ENCODE measurements at regions of chr19 and their contacts with region 1.

Region 1: DNA sequence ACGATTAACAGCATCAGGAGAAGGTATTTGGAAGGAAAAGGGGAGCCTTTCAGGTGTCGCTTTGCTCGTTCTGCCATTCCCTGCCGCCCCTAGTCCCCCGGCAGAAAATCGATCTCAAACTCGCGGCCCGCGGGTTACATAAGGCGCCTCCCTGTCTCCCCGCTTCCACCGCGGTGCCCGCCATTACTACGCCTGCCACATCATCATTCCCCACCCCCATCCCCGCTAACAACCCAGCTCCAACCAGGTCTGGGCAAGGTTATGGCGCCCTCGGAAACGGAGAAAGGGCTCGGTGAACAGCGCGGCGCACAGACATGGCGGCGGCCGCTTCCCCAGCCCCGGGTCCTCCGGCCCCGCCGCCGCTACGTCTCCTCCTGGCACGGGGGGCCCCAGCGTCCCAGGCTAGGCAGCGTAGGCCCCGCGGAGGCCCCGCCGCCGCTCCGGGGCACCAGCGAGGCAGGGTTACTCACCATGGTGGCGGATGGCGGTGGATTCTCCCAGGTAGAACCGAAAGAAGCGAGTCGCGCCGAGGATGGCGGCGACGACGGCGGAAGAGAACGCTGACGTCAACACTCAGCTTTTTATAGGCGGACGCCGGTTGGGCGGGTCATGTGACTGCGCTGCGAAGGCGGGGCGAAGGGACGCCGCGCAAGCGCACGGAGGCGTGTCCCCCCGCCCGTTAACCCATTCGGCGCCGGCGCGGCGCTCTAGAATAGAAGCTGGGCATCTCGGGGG is at the start of gene EEF2:
- DNase-seq: peak; percentile 90
- H3K4me3 Mint-ChIP-seq: peak within 1 kb of the TSS; percentile 95
- H3K27ac Mint-ChIP-seq: peak within 1 kb of the TSS; percentile 90
- H3K4me1 Mint-ChIP-seq: peaks cover 29% of the 10 kb centered on the region
- H3K27me3 Mint-ChIP-seq: no peaks in the 10 kb centered on the region
- CTCF ChIP-seq: no peak
- total RNA-seq, gene EEF2: 2,296 and 3,126 TPM in 2 replicates

Region 2: DNA sequence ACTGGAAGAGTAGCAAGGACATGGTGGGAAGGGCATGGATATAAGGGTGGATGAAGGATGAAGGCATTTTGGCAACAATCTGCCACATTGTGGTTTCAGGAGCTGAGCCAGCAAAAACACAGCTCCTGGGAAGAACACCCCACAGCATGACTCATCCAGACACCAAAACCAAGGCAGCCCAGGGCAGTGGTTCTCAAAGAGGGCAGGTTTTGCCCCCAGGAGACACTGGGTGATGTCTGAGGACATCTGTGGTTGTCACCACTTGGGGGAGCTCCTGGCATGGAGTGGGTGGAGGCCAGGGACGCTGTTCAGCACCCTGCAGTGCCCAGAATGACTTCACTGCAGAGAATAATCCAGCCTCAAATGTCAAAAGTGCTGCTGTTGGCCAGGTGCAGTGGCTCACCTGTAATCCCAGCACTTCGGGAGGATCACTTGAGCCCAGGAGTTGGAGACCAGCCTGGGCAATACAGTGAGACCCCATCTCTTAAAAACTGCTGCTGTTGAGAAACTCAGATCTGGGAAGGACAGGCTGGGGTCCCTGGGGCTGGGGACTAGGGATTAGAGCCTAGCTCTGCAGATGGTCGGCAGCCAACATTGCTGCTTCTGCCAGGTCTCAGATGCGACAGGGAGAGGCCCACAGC is 132.3 kb before region 1 on chr19:
- CTCF ChIA-PET with region 1: interaction called, 4 read pairs
- POLR2A ChIA-PET with region 1: interaction called, 11 read pairs
- intact Hi-C with region 1: loop called (anchors 1 kb)
- DNase-seq: peak; percentile 99
- H3K4me3 Mint-ChIP-seq: no peak overlapping the region
- H3K27ac Mint-ChIP-seq: no peak overlapping the region
- H3K4me1 Mint-ChIP-seq: peaks cover 9% of the 10 kb centered on the region
- H3K27me3 Mint-ChIP-seq: peaks cover 53% of the 10 kb centered on the region
- CTCF ChIP-seq: peak; percentile 62

Region 3: DNA sequence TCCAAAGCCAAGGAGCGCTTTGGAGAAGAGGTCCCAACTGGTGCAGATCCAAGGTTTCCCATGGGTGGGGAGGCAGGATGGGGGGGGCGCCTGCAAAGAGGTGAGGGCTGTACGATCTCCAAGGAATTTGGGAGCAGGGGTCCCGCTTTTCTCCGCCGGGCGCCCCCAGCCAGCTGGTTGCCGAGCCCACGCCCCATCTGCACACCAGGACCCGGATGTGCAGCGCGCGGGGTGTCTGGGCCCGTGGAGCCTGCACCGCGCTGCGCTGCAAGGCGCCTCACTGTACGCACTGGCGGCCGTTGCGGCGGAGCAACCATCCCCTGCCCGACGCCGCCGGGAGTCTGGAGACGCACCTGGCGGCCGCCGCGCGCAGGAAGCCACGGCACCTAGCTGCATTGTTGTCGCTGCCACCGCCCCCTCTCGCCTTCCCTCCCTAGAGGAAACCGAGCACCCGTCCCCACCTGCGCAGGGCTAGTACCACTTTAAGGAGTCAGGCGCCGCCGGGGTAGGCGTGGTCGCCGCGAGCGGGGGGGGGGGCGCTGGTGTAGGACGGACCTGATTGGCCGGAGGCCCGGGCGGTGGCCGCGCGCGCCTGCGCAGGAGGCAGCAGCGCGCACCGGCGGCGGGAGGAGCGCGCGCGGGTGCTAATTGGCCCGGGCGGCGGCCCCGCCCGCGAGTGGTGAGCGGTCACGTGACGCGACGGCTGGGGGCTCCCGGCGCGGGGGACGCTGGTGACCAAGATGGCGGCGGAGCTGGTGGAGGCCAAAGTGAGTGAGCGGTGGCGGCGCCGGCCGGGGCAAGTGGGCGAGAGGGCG is 22.2 kb after region 1 on chr19 and contains the start of gene PIAS4:
- CTCF ChIA-PET with region 1: interaction called, 13 read pairs
- POLR2A ChIA-PET with region 1: interaction called, 46 read pairs
- intact Hi-C with region 1: loop called (anchors 2 kb)
- DNase-seq: peak; percentile 95
- H3K4me3 Mint-ChIP-seq: peak within 1 kb of the TSS; percentile 83
- H3K27ac Mint-ChIP-seq: peak within 1 kb of the TSS; percentile 90
- H3K4me1 Mint-ChIP-seq: peaks cover 17% of the 10 kb centered on the region
- H3K27me3 Mint-ChIP-seq: no peaks in the 10 kb centered on the region
- CTCF ChIP-seq: no peak
- total RNA-seq, gene PIAS4: 15.1 and 31.4 TPM in 2 replicates

Region 4: DNA sequence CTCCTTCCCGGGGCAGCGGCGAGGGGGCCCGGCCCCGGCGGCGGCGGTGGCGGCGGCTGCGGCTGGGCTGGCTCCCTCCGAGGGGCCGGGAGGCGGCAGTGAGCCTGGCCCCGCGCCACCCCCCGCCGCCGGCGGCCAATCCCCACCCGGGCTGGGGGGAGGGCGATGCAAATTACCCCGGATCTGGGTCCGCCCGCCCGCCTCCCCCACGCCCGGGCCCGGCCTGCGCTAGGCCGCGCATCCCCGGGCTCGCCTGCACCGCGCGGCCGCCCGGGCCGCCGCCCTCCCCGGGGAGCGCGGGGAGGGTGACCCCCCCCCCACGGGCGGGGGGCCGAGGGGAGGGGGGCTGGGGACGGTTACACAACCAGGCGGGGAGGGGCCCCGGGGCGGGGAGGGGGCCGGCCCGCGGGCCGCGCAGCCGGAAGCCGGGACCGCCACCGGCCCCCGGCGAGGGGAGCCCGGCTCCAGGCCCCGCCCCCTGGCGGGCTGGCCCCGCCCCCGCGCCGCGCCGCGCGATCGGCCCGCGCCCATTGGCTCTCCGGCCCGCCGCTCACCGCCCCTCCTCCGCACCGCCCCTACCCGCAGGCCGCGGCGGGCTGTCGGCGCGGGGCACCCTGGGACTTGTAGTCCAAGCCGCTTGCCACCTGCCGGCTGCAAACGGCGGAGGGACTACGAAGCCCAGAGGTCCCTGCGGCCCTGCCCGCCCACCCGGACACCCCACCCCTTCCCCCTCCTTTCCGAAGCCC is 80.5 kb after region 1 on chr19:
- CTCF ChIA-PET with region 1: no interaction called
- POLR2A ChIA-PET with region 1: interaction called, 20 read pairs
- intact Hi-C with region 1: no loop called
- DNase-seq: peak; percentile 95
- H3K4me3 Mint-ChIP-seq: peak overlapping the region; percentile 79
- H3K27ac Mint-ChIP-seq: no peak overlapping the region
- H3K4me1 Mint-ChIP-seq: peaks cover 5% of the 10 kb centered on the region
- H3K27me3 Mint-ChIP-seq: no peaks in the 10 kb centered on the region
- CTCF ChIP-seq: no peak

Region 5: GRCh38 chr19:4186087-4186993 is 201.3 kb after region 1 on chr19:
- CTCF ChIA-PET with region 1: interaction called, 4 read pairs
- POLR2A ChIA-PET with region 1: interaction called, 4 read pairs
- intact Hi-C with region 1: loop called (anchors 1 kb)
- DNase-seq: peak; percentile 86
- H3K4me3 Mint-ChIP-seq: no peak overlapping the region
- H3K27ac Mint-ChIP-seq: no peak overlapping the region
- H3K4me1 Mint-ChIP-seq: peaks cover 13% of the 10 kb centered on the region
- H3K27me3 Mint-ChIP-seq: no peaks in the 10 kb centered on the region
- CTCF ChIP-seq: peak; percentile 67

Region 6: GRCh38 chr19:4208385-4209094 is 223.5 kb after region 1 on chr19:
- CTCF ChIA-PET with region 1: interaction called, 3 read pairs
- POLR2A ChIA-PET with region 1: interaction called, 3 read pairs
- intact Hi-C with region 1: loop called (anchors 1 kb)
- DNase-seq: peak; percentile 50
- H3K4me3 Mint-ChIP-seq: no peak overlapping the region
- H3K27ac Mint-ChIP-seq: no peak overlapping the region
- H3K4me1 Mint-ChIP-seq: peaks cover 10% of the 10 kb centered on the region
- H3K27me3 Mint-ChIP-seq: peaks cover 17% of the 10 kb centered on the region
- CTCF ChIP-seq: peak; percentile 1